Right ventricle myocardium inferior (tissue), 1 donor: ENCODE measurements at regions of chr7 and their contacts with region 1.

Region 1: GRCh38 chr7:108016841-108017775 is 14.1 kb upstream of the LAMB1 start:
- DNase-seq: no peak
- ATAC-seq: peak; percentile 57

Region 2: DNA sequence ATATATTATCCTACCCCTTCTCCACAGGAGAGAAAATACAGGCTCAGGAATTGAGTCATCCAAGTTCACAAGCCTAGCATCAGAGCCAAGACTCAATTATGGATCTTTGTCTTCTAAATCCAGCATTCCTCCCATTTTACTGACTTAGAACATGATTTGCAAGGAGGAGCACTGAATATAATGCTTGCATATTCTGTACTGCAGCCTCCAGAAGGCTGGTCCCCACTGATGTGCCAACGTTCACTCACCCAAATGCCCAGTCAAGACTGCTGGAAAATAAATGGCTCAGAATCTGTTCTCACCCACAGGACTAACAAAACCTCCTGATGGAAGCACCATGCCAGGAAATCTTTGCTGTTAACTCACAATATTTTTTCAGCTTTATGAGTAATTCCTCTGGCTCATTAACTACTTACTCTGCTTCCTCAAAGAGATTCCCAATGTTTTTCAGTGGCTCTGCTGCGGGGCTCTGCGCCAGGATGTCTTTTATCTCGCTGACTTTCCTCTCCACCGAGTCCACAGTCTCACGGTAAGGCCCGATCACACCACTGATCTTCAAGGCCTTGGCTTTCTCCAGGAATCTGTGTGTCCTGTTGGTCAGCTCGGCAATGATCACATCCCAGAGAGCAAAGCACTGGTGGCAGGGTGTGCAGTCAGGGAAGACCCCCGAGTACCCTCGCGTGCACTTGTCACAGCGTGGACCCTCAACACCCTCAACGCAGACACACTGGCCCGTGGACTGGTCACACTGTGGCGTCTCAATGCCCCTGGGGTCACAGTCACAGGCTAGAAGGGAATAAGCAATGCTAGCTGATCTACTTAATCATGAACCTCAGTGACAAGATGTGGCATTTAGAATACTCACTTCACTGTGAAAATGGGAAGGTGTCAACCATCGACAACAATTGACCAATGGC is 77.3 kb before region 1 on chr7:
- intact Hi-C with region 1: loop called (anchors 2 kb)
- DNase-seq: peak; percentile 80
- ATAC-seq: peak; percentile 56